ENCODE measurements at regions of chr16 and their contacts with region 1.

Region 1: DNA sequence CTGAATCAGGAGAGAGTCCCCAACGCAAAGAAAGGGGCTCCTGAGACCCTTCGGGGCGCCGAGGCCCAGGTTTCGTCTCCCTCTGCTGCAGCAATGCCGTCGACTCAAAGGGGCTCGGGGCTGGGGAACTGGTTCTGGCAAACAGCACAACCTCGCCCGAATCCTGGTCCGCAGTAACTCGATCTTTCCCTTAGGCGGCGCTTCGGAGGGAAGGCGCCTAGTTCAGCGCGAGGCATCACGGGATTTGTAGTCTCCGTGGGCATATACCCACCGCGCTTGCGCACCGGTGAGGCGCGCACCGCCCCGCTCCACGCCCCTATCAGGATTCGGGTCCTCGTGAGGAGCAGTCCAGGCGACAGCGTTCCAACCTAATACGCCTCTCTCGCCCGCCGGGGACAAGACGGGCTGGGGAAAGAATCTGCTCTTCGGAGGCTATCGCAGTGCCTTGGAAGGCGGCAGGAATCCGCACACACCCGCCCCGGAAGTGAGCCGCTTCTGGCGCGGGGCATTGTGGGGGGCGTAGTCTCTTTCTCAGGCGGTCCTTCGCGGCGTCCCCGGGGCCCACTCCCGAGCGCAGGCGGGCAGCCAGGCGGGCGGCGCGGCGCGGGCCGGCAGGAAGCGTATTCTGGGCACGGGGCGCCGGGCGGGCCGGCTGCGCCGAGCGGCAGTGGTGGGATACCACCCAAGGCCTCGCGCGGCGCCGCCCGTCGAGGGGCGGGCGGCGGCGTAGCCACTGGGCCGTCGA is at the start of gene THAP11:
- DNase-seq: peak; percentile 97
- H3K4me3 ChIP-seq: peak within 1 kb of the TSS; percentile 59 to 97 (median 81)
- H3K27ac ChIP-seq: peak within 1 kb of the TSS; percentile 98 to 100 (median 100)
- H3K4me1 ChIP-seq: peaks cover 30 to 48% (median 43%) of the 10 kb centered on the region in 6 donors
- H3K27me3 ChIP-seq: no peaks in the 10 kb centered on the region
- CTCF ChIP-seq: peak; percentile 87 to 98 (median 94)
- POLR2A ChIP-seq: peak in 2 of 3 donors; percentile 10 to 51
- total RNA-seq, gene THAP11: 23.5 to 80.7 (median 35.7) TPM

Region 2: GRCh38 chr16:67935402-67936123 is 93.6 kb after region 1 on chr16:
- intact Hi-C with region 1: loop called (anchors 10 kb)
- DNase-seq: peak; percentile 99
- H3K4me3 ChIP-seq: peak overlapping the region; percentile 72 to 98 (median 96)
- H3K27ac ChIP-seq: peak overlapping the region; percentile 97 to 99 (median 98)
- H3K4me1 ChIP-seq: peaks cover 11 to 54% (median 36%) of the 10 kb centered on the region in 6 donors
- H3K27me3 ChIP-seq: no peaks in the 10 kb centered on the region
- CTCF ChIP-seq: peak in 5 of 11 experiments; percentile 7 to 45 (median 28)
- POLR2A ChIP-seq: peak in 2 of 3 donors; percentile 42 to 75